MCF 10A (cell line): ENCODE measurements at regions of chr5 and their contacts with region 1.

Region 1: GRCh38 chr5:83718195-83718825 is 2.3 kb downstream of the HAPLN1 start:
- DNase-seq: peak; percentile 67
- H3K4me3 Mint-ChIP-seq: no peak overlapping the region
- H3K27ac Mint-ChIP-seq: no peak overlapping the region
- H3K4me1 Mint-ChIP-seq: peaks cover 5% of the 10 kb centered on the region
- H3K27me3 Mint-ChIP-seq: peaks cover 99% of the 10 kb centered on the region
- CTCF ChIP-seq: peak; percentile 82

Region 2: DNA sequence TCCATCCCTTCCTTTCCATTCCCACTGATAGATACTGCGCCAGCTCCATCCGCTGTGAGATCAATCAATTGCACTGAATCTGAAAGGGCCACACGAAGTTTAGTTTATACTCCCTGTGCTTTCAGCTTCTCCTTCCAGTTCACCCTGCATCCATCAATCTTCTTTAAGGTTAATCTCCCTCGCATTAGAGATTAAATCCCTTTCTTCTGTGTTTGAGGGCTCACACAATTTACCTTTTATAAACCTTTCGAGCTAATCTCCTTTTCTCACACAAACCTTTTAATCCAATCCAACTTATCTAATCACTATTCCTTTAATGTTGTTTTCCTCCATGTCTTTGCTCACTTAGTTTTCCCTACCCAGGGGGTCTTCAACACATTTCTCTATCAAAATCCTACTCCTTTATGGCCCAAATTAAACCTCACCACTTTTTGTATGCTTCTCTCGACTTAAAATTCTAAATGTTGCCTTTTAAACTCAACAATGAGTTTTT is 66.9 kb after region 1 on chr5:
- CTCF ChIA-PET with region 1: no interaction called
- POLR2A ChIA-PET with region 1: no interaction called
- intact Hi-C with region 1: no loop called
- DNase-seq: no peak
- H3K4me3 Mint-ChIP-seq: no peak overlapping the region
- H3K27ac Mint-ChIP-seq: no peak overlapping the region
- H3K4me1 Mint-ChIP-seq: no peaks in the 10 kb centered on the region
- H3K27me3 Mint-ChIP-seq: peaks cover 61% of the 10 kb centered on the region
- CTCF ChIP-seq: no peak

Region 3: GRCh38 chr5:83871533-83872395 is 153.5 kb after region 1 on chr5:
- CTCF ChIA-PET with region 1: no interaction called
- POLR2A ChIA-PET with region 1: no interaction called
- intact Hi-C with region 1: no loop called
- DNase-seq: no peak
- H3K4me3 Mint-ChIP-seq: no peak overlapping the region
- H3K27ac Mint-ChIP-seq: no peak overlapping the region
- H3K4me1 Mint-ChIP-seq: no peaks in the 10 kb centered on the region
- H3K27me3 Mint-ChIP-seq: no peaks in the 10 kb centered on the region
- CTCF ChIP-seq: no peak

Region 4: GRCh38 chr5:84450617-84451414 is 732.5 kb after region 1 on chr5:
- CTCF ChIA-PET with region 1: no interaction called
- POLR2A ChIA-PET with region 1: no interaction called
- intact Hi-C with region 1: loop called (anchors 5 kb)
- DNase-seq: peak; percentile 9
- H3K4me3 Mint-ChIP-seq: no peak overlapping the region
- H3K27ac Mint-ChIP-seq: no peak overlapping the region
- H3K4me1 Mint-ChIP-seq: no peaks in the 10 kb centered on the region
- H3K27me3 Mint-ChIP-seq: peaks cover 71% of the 10 kb centered on the region
- CTCF ChIP-seq: peak; percentile 23